ENCODE measurements at regions of chr6 and their contacts with region 1.

Region 1: GRCh38 chr6:53377793-53378192 is 29.0 kb upstream of the ELOVL5 start:
- DNase-seq: no peak
- ATAC-seq: no peak
- H3K4me3 ChIP-seq: no peak overlapping the region
- H3K27ac ChIP-seq: no peak overlapping the region
- H3K4me1 ChIP-seq: peaks cover 0 to 3% of the 10 kb centered on the region in 2 donors
- H3K27me3 ChIP-seq: no peaks in the 10 kb centered on the region

Region 2: GRCh38 chr6:53328375-53328774 is 49.4 kb before region 1 on chr6:
- intact Hi-C with region 1: loop called in 1 of 2 experiments (anchors 1 kb)
- DNase-seq: no peak
- ATAC-seq: no peak
- H3K4me3 ChIP-seq: no peak overlapping the region
- H3K27ac ChIP-seq: no peak overlapping the region
- H3K4me1 ChIP-seq: peaks cover 5 to 13% of the 10 kb centered on the region in 2 donors
- H3K27me3 ChIP-seq: no peaks in the 10 kb centered on the region